ENCODE measurements at regions of chr14 and their contacts with region 1.

Region 1: GRCh38 chr14:63180011-63180410 is 24.2 kb upstream of the RHOJ start:
- DNase-seq: no peak
- H3K4me3 ChIP-seq: no peak overlapping the region
- H3K27ac ChIP-seq: peak overlapping the region in 2 of 4 donors; percentile 12 to 15
- H3K4me1 ChIP-seq: peaks cover 2 to 17% (median 11%) of the 10 kb centered on the region in 4 donors
- H3K27me3 ChIP-seq: no peaks in the 10 kb centered on the region
- CTCF ChIP-seq: no peak
- EP300 ChIP-seq: no peak
- POLR2A ChIP-seq: no peak

Region 2: DNA sequence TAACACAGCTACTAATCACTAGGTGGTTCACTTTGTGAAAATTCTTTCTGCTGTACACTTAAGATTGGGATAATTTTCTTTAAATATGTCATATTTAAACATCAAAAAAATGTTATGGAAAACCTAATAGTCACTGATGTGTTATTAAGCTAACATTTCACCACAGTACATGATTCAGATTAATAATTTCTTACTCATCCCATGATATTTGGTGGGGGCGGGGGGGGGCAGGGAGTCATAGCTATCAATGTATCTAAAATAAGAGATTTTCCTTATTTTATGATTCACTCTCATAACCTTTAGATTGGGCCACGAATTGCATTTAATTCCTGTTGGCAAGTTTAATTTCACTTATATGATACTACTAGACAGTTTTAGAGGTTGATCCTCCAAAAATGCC is 223.6 kb before region 1 on chr14:
- intact Hi-C with region 1: no loop called
- DNase-seq: no peak
- H3K4me3 ChIP-seq: no peak overlapping the region
- H3K27ac ChIP-seq: no peak overlapping the region
- H3K4me1 ChIP-seq: peaks cover 0 to 5% (median 0%) of the 10 kb centered on the region in 4 donors
- H3K27me3 ChIP-seq: no peaks in the 10 kb centered on the region
- CTCF ChIP-seq: no peak
- EP300 ChIP-seq: no peak
- POLR2A ChIP-seq: no peak

Region 3: DNA sequence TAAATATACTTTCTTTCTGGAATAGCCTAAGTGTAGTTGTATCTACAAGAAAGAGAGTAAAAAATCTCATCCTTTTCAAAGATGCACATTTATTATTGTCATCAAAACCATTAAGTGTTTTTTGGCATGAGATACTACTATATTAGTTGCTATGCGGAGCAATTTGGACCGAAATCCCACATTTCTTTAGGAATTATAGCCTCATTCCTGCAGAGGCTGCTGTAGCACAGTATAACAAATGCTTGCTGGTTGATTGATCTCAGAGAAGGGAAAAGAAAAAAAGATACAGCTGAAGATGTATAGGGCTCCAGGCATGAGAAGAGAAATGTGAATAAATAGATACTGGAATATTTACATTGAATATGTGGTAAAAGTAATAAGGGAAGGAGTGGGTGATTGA is 60.2 kb after region 1 on chr14:
- intact Hi-C with region 1: loop called (anchors 2 kb)
- DNase-seq: no peak
- H3K4me3 ChIP-seq: no peak overlapping the region
- H3K27ac ChIP-seq: no peak overlapping the region
- H3K4me1 ChIP-seq: peaks cover 13 to 17% (median 16%) of the 10 kb centered on the region in 4 donors
- H3K27me3 ChIP-seq: no peaks in the 10 kb centered on the region
- CTCF ChIP-seq: no peak
- EP300 ChIP-seq: no peak
- POLR2A ChIP-seq: no peak

Measured in esophagus muscularis mucosa (tissue), 4 donors.